Naive thymus-derived CD4-positive, alpha-beta T cell (primary cell): ENCODE measurements at regions of chr6 and their contacts with region 1.

Region 1: DNA sequence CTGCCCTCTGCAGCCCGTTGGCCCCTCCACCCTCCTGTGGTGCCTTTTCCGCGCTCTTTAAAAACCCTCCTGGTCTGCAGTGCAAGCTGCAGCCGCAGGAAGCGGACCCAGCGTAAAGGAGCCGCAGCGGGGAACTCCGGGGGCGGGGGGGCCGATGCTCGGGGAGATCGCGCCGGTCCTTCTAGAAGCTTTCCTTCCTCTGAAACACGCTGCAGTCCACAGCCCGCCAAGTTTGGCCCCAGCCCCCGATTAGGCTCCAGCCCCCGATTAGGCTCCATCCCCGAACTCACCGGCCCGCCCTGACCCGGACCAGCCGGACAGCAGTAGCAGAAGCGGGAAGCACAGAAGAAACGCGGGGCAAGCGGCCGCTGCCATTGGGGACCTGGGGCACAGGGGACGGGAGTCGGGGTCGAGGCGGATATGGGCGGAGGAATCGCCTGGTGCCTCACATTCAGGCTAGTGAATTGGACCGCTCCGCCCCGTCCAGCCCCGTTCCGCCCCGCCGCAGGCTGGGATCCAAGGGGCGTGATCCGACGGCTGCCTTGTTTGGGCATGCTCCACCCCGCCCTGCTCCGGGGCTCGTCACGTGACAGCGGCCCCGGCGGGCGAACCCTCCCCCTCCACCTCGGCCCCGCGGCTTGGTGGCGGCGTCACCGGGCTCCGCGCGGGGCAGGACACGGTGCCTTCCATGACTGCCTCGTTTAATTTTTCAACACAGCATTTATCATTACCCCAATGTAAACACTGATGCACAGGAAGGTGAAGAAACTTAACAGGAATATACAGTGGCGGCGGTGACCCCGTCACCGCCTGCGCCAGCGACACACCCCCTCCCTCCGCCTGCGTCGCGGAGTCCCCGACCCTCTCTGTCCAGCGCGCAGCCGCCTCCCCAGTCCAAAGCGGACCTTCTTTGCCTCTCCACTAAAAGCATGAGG is 20.3 kb downstream of the RAET1L start:
- DNase-seq: peak; percentile 73 to 91 (median 82)
- ATAC-seq: peak; percentile 89
- H3K4me3 ChIP-seq: peak overlapping the region; percentile 87
- H3K4me3 Mint-ChIP-seq: peak overlapping the region; percentile 78 to 96 (median 91)
- H3K27ac ChIP-seq: peak overlapping the region; percentile 75
- H3K27ac Mint-ChIP-seq: peak overlapping the region; percentile 31 to 95 (median 85)
- H3K4me1 ChIP-seq: peaks cover 13 to 31% of the 10 kb centered on the region in 2 donors
- H3K4me1 Mint-ChIP-seq: peaks cover 7 to 56% (median 20%) of the 10 kb centered on the region in 7 donors
- H3K27me3 ChIP-seq: peaks cover 0 to 3% of the 10 kb centered on the region in 2 donors
- H3K27me3 Mint-ChIP-seq: peaks cover 15 to 35% (median 19%) of the 10 kb centered on the region in 5 donors

Region 2: DNA sequence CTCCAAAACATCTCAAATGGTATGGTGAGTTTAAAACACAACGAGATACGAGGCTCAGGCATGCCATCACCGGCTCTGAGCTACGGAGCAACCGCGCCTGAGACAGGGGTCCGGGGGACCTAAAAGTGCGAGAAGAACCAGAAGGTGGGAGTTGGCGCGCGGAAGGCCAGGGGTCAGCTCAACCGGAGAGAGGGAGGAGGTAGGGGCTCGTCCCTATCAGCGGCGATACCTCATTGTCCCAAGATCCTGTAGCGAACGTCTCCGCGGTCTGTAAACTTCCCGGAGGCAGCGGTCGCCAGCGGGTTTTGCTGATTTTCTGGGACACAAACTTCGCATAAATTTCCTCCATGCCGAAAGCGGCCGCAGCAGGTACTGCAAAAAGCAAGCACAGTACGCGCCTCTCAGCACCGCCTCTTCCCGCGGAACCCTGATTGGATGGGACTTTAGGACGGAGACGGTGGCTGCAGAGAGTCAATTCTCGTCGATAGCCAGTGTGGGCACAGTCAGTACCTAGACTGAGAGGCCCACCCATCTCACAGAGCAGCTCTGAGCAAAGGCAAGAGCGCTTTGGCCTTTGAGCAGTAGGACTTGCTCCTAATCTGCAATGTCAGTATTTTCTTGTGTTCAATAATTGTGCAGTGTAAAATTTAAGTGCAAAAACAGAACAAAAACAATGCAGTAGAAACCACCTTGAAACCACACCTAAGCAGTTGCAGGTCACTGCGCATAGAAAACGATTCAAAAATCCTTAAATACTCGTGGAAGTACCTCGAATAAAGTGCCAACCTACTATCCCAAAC is 258.7 kb before region 1 on chr6 and contains the start of gene NUP43:
- CTCF ChIA-PET with region 1: no interaction called
- POLR2A ChIA-PET with region 1: no interaction called
- intact Hi-C with region 1: loop called (anchors 2 to 5 kb)
- DNase-seq: peak; percentile 75 to 91 (median 90)
- ATAC-seq: peak; percentile 80
- H3K4me3 ChIP-seq: peak within 1 kb of the TSS; percentile 77
- H3K4me3 Mint-ChIP-seq: peak within 1 kb of the TSS; percentile 93 to 99 (median 97)
- H3K27ac ChIP-seq: peak within 1 kb of the TSS; percentile 82
- H3K27ac Mint-ChIP-seq: peak within 1 kb of the TSS; percentile 86 to 97 (median 95)
- H3K4me1 ChIP-seq: peaks cover 17 to 26% of the 10 kb centered on the region in 2 donors
- H3K4me1 Mint-ChIP-seq: peaks cover 14 to 46% (median 32%) of the 10 kb centered on the region in 7 donors
- H3K27me3 ChIP-seq: no peaks in the 10 kb centered on the region
- H3K27me3 Mint-ChIP-seq: no peaks in the 10 kb centered on the region
- total RNA-seq, gene NUP43: 14.0 to 70.7 (median 60.2) TPM

Region 3: GRCh38 chr6:149823013-149823412 is 182.0 kb before region 1 on chr6:
- CTCF ChIA-PET with region 1: no interaction called
- POLR2A ChIA-PET with region 1: no interaction called
- intact Hi-C with region 1: no loop called
- DNase-seq: no peak
- ATAC-seq: no peak
- H3K4me3 ChIP-seq: no peak overlapping the region
- H3K4me3 Mint-ChIP-seq: no peak overlapping the region
- H3K27ac ChIP-seq: no peak overlapping the region
- H3K27ac Mint-ChIP-seq: no peak overlapping the region
- H3K4me1 ChIP-seq: no peaks in the 10 kb centered on the region
- H3K4me1 Mint-ChIP-seq: no peaks in the 10 kb centered on the region
- H3K27me3 ChIP-seq: no peaks in the 10 kb centered on the region
- H3K27me3 Mint-ChIP-seq: peaks cover 0 to 6% (median 0%) of the 10 kb centered on the region in 5 donors

Region 4: GRCh38 chr6:149881066-149881766 is 123.8 kb before region 1 on chr6:
- CTCF ChIA-PET with region 1: no interaction called
- POLR2A ChIA-PET with region 1: no interaction called
- intact Hi-C with region 1: no loop called
- DNase-seq: no peak
- ATAC-seq: no peak
- H3K4me3 ChIP-seq: no peak overlapping the region
- H3K4me3 Mint-ChIP-seq: no peak overlapping the region
- H3K27ac ChIP-seq: no peak overlapping the region
- H3K27ac Mint-ChIP-seq: no peak overlapping the region
- H3K4me1 ChIP-seq: no peaks in the 10 kb centered on the region
- H3K4me1 Mint-ChIP-seq: peaks cover 0 to 3% (median 0%) of the 10 kb centered on the region in 7 donors
- H3K27me3 ChIP-seq: no peaks in the 10 kb centered on the region
- H3K27me3 Mint-ChIP-seq: peaks cover 28 to 61% (median 48%) of the 10 kb centered on the region in 5 donors

Region 5: DNA sequence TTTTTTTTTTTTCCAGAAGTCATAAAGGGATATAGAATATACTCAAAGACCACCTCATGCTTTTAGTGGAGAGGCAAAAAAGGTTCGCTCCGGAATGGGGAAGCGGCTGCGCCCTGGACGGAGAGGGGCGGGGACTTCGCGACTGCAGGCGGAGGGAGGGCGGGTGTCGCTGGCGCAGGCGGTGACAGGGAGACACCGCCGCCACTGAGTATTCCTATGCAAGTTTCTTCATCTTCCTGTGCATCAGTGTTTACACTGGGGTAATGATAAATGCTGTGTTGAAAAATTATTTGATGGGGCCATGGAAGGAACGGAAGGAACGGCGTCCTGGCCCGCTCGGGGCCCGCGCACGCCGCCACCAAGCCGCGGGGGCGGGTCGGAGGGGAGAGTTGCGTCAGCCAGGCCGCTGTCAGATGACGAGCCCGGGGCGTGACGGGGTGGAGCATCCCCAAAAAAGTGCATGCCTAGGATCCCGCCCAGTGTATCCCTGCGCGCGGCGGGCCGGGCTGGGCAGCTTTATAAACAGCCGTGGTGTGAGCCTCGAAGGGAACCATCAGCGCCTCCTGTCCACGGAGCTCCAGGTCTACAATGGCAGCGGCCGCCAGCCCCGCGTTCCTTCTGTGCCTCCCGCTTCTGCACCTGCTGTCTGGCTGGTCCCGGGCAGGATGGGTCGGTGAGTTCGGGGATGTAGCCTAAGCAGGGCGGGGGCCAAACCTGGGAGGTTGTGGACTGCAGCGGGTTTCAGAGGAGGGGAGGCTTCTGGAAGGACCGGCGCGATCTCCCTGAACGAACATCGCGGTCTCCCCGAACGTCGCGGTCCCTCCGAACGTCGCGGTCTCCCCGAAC is 41.4 kb before region 1 on chr6 and contains the start of gene ULBP1:
- CTCF ChIA-PET with region 1: no interaction called
- POLR2A ChIA-PET with region 1: no interaction called
- intact Hi-C with region 1: loop called (anchors 1 kb)
- DNase-seq: peak; percentile 48 to 86 (median 58)
- ATAC-seq: peak; percentile 79
- H3K4me3 ChIP-seq: peak within 1 kb of the TSS; percentile 66
- H3K4me3 Mint-ChIP-seq: peak within 1 kb of the TSS; percentile 88 to 97 (median 92)
- H3K27ac ChIP-seq: no peak within 1 kb of the TSS
- H3K27ac Mint-ChIP-seq: peak within 1 kb of the TSS in 8 of 9 donors; percentile 15 to 92 (median 74)
- H3K4me1 ChIP-seq: peaks cover 8 to 24% of the 10 kb centered on the region in 2 donors
- H3K4me1 Mint-ChIP-seq: peaks cover 14 to 28% (median 23%) of the 10 kb centered on the region in 7 donors
- H3K27me3 ChIP-seq: peaks cover 12 to 36% of the 10 kb centered on the region in 2 donors
- H3K27me3 Mint-ChIP-seq: peaks cover 72 to 90% (median 87%) of the 10 kb centered on the region in 5 donors
- total RNA-seq, gene ULBP1: 1.4 TPM in 1 of 5 experiments, not detected in the others

Region 6: DNA sequence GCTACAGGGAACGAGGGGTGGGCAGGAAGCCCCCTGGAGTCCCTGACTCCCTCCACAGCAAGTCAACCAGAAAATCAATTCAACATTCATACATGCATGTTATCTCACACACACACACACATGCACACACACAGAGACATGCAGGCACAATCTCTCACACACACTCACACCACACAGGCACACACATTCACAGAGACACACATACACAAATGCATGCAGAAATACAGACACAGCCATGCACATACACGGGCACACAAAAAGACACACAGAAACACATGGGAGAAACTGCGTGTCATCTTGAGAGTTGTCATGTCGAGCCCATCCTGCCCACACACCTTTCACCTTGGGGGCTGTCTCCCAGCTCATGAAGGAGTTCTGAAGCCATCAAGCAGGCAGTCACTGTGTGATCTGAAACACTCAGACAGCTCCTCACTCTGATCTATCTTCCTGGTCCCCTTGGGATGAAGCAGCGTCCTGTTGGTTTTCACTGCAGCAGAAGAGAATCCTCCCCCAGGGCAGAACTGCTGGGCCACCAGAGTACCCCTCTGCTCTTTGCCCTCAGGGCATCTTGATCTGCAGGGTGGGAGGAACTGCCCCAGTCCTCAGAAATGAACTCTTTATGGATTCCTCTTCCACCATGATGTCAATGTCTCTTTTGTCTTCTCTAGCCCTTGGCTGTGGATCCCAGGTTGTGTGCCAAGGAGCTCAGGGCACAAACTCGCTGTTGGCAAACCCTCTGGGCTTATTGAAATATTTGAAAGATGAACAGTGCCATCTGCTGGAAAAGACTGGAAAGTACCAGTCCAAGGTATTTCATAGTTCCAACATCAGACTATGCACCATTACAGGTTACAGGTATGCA is 11.5 kb after region 1 on chr6:
- CTCF ChIA-PET with region 1: interaction called, 6 read pairs
- POLR2A ChIA-PET with region 1: no interaction called
- intact Hi-C with region 1: loop called (anchors 1 kb)
- DNase-seq: peak in 8 of 9 donors; percentile 38 to 77 (median 68)
- ATAC-seq: peak; percentile 85
- H3K4me3 ChIP-seq: no peak overlapping the region
- H3K4me3 Mint-ChIP-seq: no peak overlapping the region
- H3K27ac ChIP-seq: no peak overlapping the region
- H3K27ac Mint-ChIP-seq: peak overlapping the region in 1 of 9 donors; percentile 1
- H3K4me1 ChIP-seq: peaks cover 0 to 2% of the 10 kb centered on the region in 2 donors
- H3K4me1 Mint-ChIP-seq: peaks cover 10 to 23% (median 15%) of the 10 kb centered on the region in 7 donors
- H3K27me3 ChIP-seq: peaks cover 11 to 16% of the 10 kb centered on the region in 2 donors
- H3K27me3 Mint-ChIP-seq: peaks cover 60 to 80% (median 66%) of the 10 kb centered on the region in 5 donors

Region 7: GRCh38 chr6:150026976-150027805 is 22.1 kb after region 1 on chr6:
- CTCF ChIA-PET with region 1: no interaction called
- POLR2A ChIA-PET with region 1: no interaction called
- intact Hi-C with region 1: no loop called
- DNase-seq: no peak
- ATAC-seq: no peak
- H3K4me3 ChIP-seq: no peak overlapping the region
- H3K4me3 Mint-ChIP-seq: no peak overlapping the region
- H3K27ac ChIP-seq: no peak overlapping the region
- H3K27ac Mint-ChIP-seq: no peak overlapping the region
- H3K4me1 ChIP-seq: no peaks in the 10 kb centered on the region
- H3K4me1 Mint-ChIP-seq: peaks cover 6 to 14% (median 9%) of the 10 kb centered on the region in 7 donors
- H3K27me3 ChIP-seq: peaks cover 0 to 11% of the 10 kb centered on the region in 2 donors
- H3K27me3 Mint-ChIP-seq: peaks cover 35 to 74% (median 55%) of the 10 kb centered on the region in 5 donors

Region 8: DNA sequence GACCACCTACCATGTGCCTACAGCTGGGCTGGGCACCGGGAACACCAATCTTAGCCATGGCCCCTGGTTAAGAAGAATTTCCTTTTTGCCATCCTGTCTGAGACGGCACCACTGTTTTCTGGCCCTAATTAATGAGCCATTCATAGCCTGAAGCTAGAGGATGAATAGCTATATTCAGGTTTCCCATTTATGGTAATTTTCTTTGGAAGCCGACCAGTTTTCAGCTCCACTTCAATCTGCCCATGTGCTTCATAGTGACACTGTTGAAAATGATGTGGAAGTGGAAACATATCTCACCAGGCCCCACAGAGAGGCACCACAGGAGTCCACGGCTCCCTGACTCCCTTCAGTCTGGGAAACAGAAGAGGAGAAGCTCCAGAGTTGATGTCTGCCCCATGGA is 86.4 kb after region 1 on chr6:
- CTCF ChIA-PET with region 1: no interaction called
- POLR2A ChIA-PET with region 1: no interaction called
- intact Hi-C with region 1: no loop called
- DNase-seq: no peak
- ATAC-seq: no peak
- H3K4me3 ChIP-seq: no peak overlapping the region
- H3K4me3 Mint-ChIP-seq: no peak overlapping the region
- H3K27ac ChIP-seq: no peak overlapping the region
- H3K27ac Mint-ChIP-seq: no peak overlapping the region
- H3K4me1 ChIP-seq: no peaks in the 10 kb centered on the region
- H3K4me1 Mint-ChIP-seq: peaks cover 0 to 4% (median 0%) of the 10 kb centered on the region in 7 donors
- H3K27me3 ChIP-seq: no peaks in the 10 kb centered on the region
- H3K27me3 Mint-ChIP-seq: peaks cover 5 to 13% (median 12%) of the 10 kb centered on the region in 5 donors

Region 9: GRCh38 chr6:150417899-150418826 is 413.1 kb after region 1 on chr6:
- CTCF ChIA-PET with region 1: no interaction called
- POLR2A ChIA-PET with region 1: no interaction called
- intact Hi-C with region 1: loop called in 1 of 2 experiments (anchors 5 kb)
- DNase-seq: peak in 6 of 9 donors; percentile 24 to 56 (median 32)
- ATAC-seq: peak; percentile 81
- H3K4me3 ChIP-seq: peak overlapping the region; percentile 53
- H3K4me3 Mint-ChIP-seq: peak overlapping the region; percentile 65 to 88 (median 80)
- H3K27ac ChIP-seq: no peak overlapping the region
- H3K27ac Mint-ChIP-seq: peak overlapping the region in 2 of 9 donors; percentile 26
- H3K4me1 ChIP-seq: peaks cover 0 to 4% of the 10 kb centered on the region in 2 donors
- H3K4me1 Mint-ChIP-seq: peaks cover 2 to 15% (median 10%) of the 10 kb centered on the region in 7 donors
- H3K27me3 ChIP-seq: no peaks in the 10 kb centered on the region
- H3K27me3 Mint-ChIP-seq: peaks cover 27 to 41% (median 29%) of the 10 kb centered on the region in 5 donors